B cell (primary cell): ENCODE measurements at regions of chr6 and their contacts with region 1.

Region 1: GRCh38 chr6:151765444-151765886 is 42.0 kb upstream of the ESR1 start:
- DNase-seq: peak; percentile 67
- ATAC-seq: peak; percentile 61
- H3K4me3 ChIP-seq: no peak overlapping the region
- H3K4me3 Mint-ChIP-seq: no peak overlapping the region
- H3K27ac ChIP-seq: no peak overlapping the region
- H3K27ac Mint-ChIP-seq: no peak overlapping the region
- H3K4me1 ChIP-seq: peaks cover 5 to 12% of the 10 kb centered on the region in 2 donors
- H3K4me1 Mint-ChIP-seq: peaks cover 22% of the 10 kb centered on the region
- H3K27me3 ChIP-seq: no peaks in the 10 kb centered on the region
- H3K27me3 Mint-ChIP-seq: no peaks in the 10 kb centered on the region
- CTCF ChIP-seq: peak; percentile 94

Region 2: DNA sequence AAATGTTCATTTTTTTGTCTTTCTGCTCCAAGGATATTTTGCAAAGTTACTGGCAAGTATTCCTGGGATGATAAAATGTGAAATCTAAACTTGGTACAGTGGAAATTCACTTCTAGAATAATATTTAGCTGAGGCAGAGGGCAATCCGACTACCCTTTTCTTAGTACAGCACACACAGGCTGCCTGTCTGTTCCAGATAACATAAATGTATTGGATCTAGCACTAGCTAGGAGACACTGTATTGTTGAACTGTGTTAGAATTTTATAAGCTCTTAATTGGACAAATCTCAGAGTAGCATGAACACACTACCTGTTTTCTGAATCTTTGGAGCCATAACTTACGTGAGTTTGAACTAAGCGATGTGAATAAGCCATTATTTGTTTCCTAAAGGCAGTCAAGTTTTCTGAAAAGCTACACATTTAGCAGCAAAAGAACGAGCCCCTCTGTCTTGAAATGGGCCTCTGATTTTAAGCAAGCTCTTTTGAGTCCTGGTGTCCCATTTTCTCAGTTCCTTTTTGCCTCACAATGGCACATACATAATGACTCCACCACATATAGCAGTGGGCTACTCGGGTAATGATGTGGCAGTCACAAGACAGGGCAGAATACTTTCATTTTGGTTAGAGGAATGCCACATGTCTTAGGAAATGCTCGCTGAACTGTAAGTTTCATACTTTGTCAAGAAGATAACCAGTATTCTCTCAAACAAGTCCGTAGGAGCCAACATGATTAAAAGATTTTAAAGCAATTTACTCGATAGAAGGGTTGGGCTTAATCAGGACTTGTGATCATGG is 74.5 kb before region 1 on chr6:
- CTCF ChIA-PET with region 1: interaction called, 22 read pairs
- POLR2A ChIA-PET with region 1: no interaction called
- intact Hi-C with region 1: loop called (anchors 10 kb)
- DNase-seq: peak; percentile 82
- ATAC-seq: peak; percentile 84
- H3K4me3 ChIP-seq: peak overlapping the region in 4 of 5 experiments; percentile 15 to 64 (median 41)
- H3K4me3 Mint-ChIP-seq: peak overlapping the region; percentile 75
- H3K27ac ChIP-seq: peak overlapping the region; percentile 65 to 76
- H3K27ac Mint-ChIP-seq: peak overlapping the region; percentile 91
- H3K4me1 ChIP-seq: peaks cover 19 to 20% of the 10 kb centered on the region in 2 donors
- H3K4me1 Mint-ChIP-seq: peaks cover 23% of the 10 kb centered on the region
- H3K27me3 ChIP-seq: no peaks in the 10 kb centered on the region
- H3K27me3 Mint-ChIP-seq: no peaks in the 10 kb centered on the region
- CTCF ChIP-seq: no peak

Region 3: DNA sequence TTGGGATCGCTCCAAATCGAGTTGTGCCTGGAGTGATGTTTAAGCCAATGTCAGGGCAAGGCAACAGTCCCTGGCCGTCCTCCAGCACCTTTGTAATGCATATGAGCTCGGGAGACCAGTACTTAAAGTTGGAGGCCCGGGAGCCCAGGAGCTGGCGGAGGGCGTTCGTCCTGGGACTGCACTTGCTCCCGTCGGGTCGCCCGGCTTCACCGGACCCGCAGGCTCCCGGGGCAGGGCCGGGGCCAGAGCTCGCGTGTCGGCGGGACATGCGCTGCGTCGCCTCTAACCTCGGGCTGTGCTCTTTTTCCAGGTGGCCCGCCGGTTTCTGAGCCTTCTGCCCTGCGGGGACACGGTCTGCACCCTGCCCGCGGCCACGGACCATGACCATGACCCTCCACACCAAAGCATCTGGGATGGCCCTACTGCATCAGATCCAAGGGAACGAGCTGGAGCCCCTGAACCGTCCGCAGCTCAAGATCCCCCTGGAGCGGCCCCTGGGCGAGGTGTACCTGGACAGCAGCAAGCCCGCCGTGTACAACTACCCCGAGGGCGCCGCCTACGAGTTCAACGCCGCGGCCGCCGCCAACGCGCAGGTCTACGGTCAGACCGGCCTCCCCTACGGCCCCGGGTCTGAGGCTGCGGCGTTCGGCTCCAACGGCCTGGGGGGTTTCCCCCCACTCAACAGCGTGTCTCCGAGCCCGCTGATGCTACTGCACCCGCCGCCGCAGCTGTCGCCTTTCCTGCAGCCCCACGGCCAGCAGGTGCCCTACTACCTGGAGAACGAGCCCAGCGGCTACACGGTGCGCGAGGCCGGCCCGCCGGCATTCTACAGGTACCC is 42.3 kb after region 1 on chr6 and contains the start of gene ESR1:
- CTCF ChIA-PET with region 1: interaction called, 4 read pairs
- POLR2A ChIA-PET with region 1: no interaction called
- intact Hi-C with region 1: loop called (anchors 2 kb)
- DNase-seq: peak; percentile 53
- ATAC-seq: peak; percentile 68
- H3K4me3 ChIP-seq: peak within 1 kb of the TSS in 4 of 5 experiments; percentile 27 to 56 (median 46)
- H3K4me3 Mint-ChIP-seq: peak within 1 kb of the TSS; percentile 89
- H3K27ac ChIP-seq: no peak within 1 kb of the TSS
- H3K27ac Mint-ChIP-seq: no peak within 1 kb of the TSS
- H3K4me1 ChIP-seq: peaks cover 20 to 22% of the 10 kb centered on the region in 2 donors
- H3K4me1 Mint-ChIP-seq: peaks cover 23% of the 10 kb centered on the region
- H3K27me3 ChIP-seq: peaks cover 0 to 31% (median 24%) of the 10 kb centered on the region in 4 experiments
- H3K27me3 Mint-ChIP-seq: peaks cover 45% of the 10 kb centered on the region
- CTCF ChIP-seq: no peak
- total RNA-seq, gene ESR1: 3.7 and 5.9 TPM in 2 replicates

Region 4: DNA sequence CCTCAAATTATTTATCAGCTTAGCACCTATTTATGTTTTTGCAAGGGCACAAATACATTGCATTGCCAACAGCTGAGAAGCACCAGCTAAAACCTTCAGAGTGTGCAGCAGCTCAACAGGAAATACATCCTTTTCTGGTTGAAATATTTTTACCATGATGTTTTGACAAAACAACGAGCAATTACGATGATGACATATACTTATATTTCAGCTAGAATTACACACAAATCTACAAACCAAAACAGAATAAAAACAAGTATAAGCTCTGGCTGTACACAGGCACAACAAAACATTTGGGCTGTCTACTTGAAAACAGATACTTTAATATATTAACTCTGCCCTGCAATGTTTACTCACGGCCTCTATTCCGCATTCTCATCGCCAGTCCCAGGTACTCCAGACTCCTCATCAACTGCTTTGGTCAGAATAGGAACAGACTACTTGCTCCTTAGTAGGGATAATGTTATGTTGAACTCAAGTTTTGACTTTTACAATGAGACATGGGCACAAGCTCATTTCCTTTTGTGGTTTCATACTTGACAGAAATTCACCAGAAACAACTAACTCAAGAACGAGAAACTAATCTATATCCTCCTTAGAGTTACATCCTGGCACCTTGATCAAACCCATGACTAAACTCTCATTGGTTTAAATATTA is 419.6 kb after region 1 on chr6:
- CTCF ChIA-PET with region 1: no interaction called
- POLR2A ChIA-PET with region 1: no interaction called
- intact Hi-C with region 1: loop called (anchors 5 kb)
- DNase-seq: peak; percentile 42
- ATAC-seq: peak; percentile 62
- H3K4me3 ChIP-seq: peak overlapping the region; percentile 24 to 75 (median 48)
- H3K4me3 Mint-ChIP-seq: peak overlapping the region; percentile 99
- H3K27ac ChIP-seq: peak overlapping the region; percentile 76 to 82
- H3K27ac Mint-ChIP-seq: peak overlapping the region; percentile 99
- H3K4me1 ChIP-seq: peaks cover 24 to 35% of the 10 kb centered on the region in 2 donors
- H3K4me1 Mint-ChIP-seq: peaks cover 62% of the 10 kb centered on the region
- H3K27me3 ChIP-seq: no peaks in the 10 kb centered on the region
- H3K27me3 Mint-ChIP-seq: no peaks in the 10 kb centered on the region
- CTCF ChIP-seq: no peak

Region 5: DNA sequence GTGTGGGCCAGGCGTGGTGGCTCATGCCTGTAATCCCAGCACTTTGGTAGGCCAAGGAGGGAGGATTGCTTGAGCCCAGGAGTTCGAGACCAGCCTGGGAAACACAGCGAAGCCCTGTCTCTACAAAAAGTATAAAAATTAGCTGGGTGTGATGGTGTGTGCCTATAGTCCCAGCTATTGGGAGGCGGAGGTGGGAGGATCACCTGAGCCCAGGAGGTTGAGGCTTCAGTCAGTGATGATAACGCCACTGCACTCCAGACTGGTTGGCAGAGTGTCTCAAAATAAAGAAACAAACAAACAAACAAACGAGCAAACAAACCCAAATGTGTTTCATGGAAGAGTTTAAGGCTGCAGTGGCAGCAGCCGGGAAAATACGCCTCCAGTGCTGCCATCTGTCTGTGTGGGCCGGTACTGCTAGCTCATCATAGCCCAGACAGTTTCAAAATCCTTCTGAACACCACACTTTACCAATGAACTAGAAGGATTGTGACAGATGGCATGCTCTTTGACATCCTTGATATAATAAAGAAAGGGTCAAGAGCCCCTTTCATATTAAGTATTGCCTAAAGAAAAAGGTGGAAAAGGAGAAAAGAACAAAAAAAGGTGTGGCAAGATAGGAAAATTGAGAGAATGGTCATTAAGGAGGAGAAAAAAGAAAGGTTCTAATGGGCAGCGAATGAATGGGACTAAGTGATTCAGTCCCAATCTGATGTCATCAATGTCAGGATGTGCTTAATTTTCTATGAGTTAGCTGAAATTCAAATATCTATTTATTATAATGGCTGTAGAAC is 573.1 kb after region 1 on chr6:
- CTCF ChIA-PET with region 1: interaction called, 6 read pairs
- POLR2A ChIA-PET with region 1: no interaction called
- intact Hi-C with region 1: loop called (anchors 10 kb)
- DNase-seq: peak; percentile 63
- ATAC-seq: peak; percentile 63
- H3K4me3 ChIP-seq: no peak overlapping the region
- H3K4me3 Mint-ChIP-seq: no peak overlapping the region
- H3K27ac ChIP-seq: no peak overlapping the region
- H3K27ac Mint-ChIP-seq: no peak overlapping the region
- H3K4me1 ChIP-seq: peaks cover 0 to 3% of the 10 kb centered on the region in 2 donors
- H3K4me1 Mint-ChIP-seq: peaks cover 2% of the 10 kb centered on the region
- H3K27me3 ChIP-seq: no peaks in the 10 kb centered on the region
- H3K27me3 Mint-ChIP-seq: peaks cover 9% of the 10 kb centered on the region
- CTCF ChIP-seq: peak; percentile 96

Region 6: GRCh38 chr6:152642989-152643388 is 877.5 kb after region 1 on chr6:
- CTCF ChIA-PET with region 1: no interaction called
- POLR2A ChIA-PET with region 1: no interaction called
- intact Hi-C with region 1: no loop called
- DNase-seq: peak; percentile 11
- ATAC-seq: no peak
- H3K4me3 ChIP-seq: no peak overlapping the region
- H3K4me3 Mint-ChIP-seq: no peak overlapping the region
- H3K27ac ChIP-seq: no peak overlapping the region
- H3K27ac Mint-ChIP-seq: no peak overlapping the region
- H3K4me1 ChIP-seq: no peaks in the 10 kb centered on the region
- H3K4me1 Mint-ChIP-seq: no peaks in the 10 kb centered on the region
- H3K27me3 ChIP-seq: peaks cover 0 to 3% (median 1%) of the 10 kb centered on the region in 4 experiments
- H3K27me3 Mint-ChIP-seq: peaks cover 11% of the 10 kb centered on the region
- CTCF ChIP-seq: no peak